ENCODE measurements at regions of chr1 and their contacts with region 1.

Region 1: DNA sequence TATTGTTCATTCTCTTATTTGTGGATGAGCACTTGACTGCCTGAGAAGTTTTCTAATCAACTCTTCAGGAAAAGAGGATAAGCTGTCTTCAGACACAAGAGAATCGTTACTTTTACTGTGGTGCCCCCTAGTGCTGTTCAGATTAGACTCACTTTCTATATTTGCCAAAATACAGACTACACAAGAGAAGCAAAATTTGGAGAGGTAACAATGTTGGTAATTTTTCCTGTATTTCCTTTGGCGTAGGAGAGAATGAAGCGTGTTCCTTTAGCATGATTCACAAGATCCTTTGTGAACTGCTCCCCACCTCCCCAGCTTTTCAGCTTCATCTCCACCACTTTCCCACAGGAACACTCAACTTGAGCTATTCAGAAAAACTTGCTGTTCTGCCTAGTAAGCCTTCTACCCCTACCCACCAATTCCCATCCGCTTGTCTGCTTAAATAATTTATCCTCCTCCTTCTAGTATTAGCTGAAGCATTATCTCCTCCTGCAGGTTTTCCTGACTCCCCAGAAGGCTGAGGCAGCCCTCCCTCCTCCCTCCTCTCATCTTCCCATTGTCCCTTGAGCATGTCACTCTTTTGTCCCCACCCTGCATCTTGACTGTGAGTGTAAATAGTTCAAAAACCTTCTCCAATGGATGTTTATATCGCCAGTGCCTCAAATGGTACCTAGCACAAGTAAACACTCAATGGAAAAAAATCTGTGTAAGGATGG is 4.5 kb downstream of the TNFSF4 start:
- DNase-seq: peak; percentile 39
- H3K4me3 Mint-ChIP-seq: no peak overlapping the region
- H3K27ac Mint-ChIP-seq: no peak overlapping the region
- H3K4me1 Mint-ChIP-seq: peaks cover 37% of the 10 kb centered on the region
- H3K27me3 Mint-ChIP-seq: peaks cover 4% of the 10 kb centered on the region

Region 2: GRCh38 chr1:172357753-172358385 is 844.7 kb before region 1 on chr1:
- CTCF ChIA-PET with region 1: no interaction called
- intact Hi-C with region 1: loop called (anchors 2 kb)
- DNase-seq: no peak
- H3K4me3 Mint-ChIP-seq: no peak overlapping the region
- H3K27ac Mint-ChIP-seq: peak overlapping the region; percentile 55
- H3K4me1 Mint-ChIP-seq: peaks cover 64% of the 10 kb centered on the region
- H3K27me3 Mint-ChIP-seq: no peaks in the 10 kb centered on the region

Region 3: GRCh38 chr1:172638885-172639831 is 563.4 kb before region 1 on chr1:
- CTCF ChIA-PET with region 1: no interaction called
- intact Hi-C with region 1: loop called (anchors 5 kb)
- DNase-seq: peak; percentile 90
- H3K4me3 Mint-ChIP-seq: peak overlapping the region; percentile 42
- H3K27ac Mint-ChIP-seq: peak overlapping the region; percentile 93
- H3K4me1 Mint-ChIP-seq: peaks cover 73% of the 10 kb centered on the region
- H3K27me3 Mint-ChIP-seq: peaks cover 9% of the 10 kb centered on the region

Region 4: GRCh38 chr1:172826096-172826743 is 376.4 kb before region 1 on chr1:
- CTCF ChIA-PET with region 1: interaction called, 42 read pairs
- intact Hi-C with region 1: loop called (anchors 1 kb)
- DNase-seq: no peak
- H3K4me3 Mint-ChIP-seq: no peak overlapping the region
- H3K27ac Mint-ChIP-seq: no peak overlapping the region
- H3K4me1 Mint-ChIP-seq: no peaks in the 10 kb centered on the region
- H3K27me3 Mint-ChIP-seq: peaks cover 6% of the 10 kb centered on the region

Region 5: DNA sequence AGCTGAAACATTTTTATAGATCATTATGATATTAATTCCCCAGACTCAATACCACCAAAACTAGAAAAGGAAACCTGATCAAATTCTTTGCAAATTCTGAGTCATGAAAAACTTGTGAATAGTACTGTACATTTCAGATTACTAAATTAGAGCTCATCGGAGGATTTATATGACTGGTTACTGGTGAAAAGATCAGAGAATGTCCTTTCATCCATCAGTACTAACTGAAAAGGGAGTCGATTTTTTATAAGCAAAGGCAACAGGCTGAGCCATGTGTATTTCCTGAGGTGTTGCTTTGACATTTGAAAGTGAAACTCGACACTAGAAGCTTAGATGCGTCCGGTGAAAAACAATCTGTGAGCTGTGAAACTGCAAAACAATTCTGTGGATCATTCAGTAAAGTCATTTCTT is 307.5 kb before region 1 on chr1:
- CTCF ChIA-PET with region 1: interaction called, 4 read pairs
- intact Hi-C with region 1: loop called (anchors 1 kb)
- DNase-seq: peak; percentile 40
- H3K4me3 Mint-ChIP-seq: no peak overlapping the region
- H3K27ac Mint-ChIP-seq: peak overlapping the region; percentile 9
- H3K4me1 Mint-ChIP-seq: peaks cover 42% of the 10 kb centered on the region
- H3K27me3 Mint-ChIP-seq: peaks cover 4% of the 10 kb centered on the region

Region 6: GRCh38 chr1:173190101-173190906 is 12.3 kb before region 1 on chr1:
- CTCF ChIA-PET with region 1: interaction called, 11 read pairs
- intact Hi-C with region 1: no loop called
- DNase-seq: peak; percentile 11
- H3K4me3 Mint-ChIP-seq: no peak overlapping the region
- H3K27ac Mint-ChIP-seq: no peak overlapping the region
- H3K4me1 Mint-ChIP-seq: peaks cover 6% of the 10 kb centered on the region
- H3K27me3 Mint-ChIP-seq: no peaks in the 10 kb centered on the region

Region 7: DNA sequence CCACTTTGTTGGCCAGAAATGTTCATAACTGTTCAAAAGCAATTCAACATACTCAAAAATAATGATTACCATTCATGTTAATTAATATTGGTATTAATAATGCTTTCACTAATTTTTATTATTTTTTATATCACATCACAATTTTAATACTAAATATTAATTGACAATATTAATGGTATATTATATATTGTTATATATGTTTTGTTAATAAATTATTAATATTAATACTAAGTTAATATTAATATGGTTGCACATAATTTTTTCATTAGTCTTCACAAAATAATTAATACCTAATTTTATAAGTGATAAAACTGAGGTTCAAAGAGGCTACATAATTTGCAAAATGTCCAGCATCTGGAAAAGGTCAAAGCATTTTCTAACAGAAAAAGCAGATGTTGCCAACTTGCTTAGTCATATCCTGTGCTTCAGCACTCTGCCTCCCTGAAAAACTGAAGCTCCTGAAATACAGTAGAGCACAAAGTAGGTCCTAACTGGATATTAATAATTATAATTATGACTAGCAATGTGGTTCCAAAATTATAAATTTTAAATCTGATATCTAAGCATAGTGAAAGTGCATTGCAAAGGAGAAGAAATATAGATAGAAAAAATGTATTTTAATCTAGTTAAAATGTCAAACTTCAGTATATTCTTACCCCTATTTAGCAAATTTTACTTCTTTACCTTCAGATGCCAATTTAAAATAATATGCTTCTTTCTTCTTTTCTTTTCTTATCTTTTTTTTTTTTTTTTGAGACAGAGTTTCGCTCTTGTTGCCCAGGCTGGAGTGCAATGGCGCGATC is 127.8 kb after region 1 on chr1:
- CTCF ChIA-PET with region 1: no interaction called
- intact Hi-C with region 1: loop called (anchors 1 kb)
- DNase-seq: no peak
- H3K4me3 Mint-ChIP-seq: no peak overlapping the region
- H3K27ac Mint-ChIP-seq: no peak overlapping the region
- H3K4me1 Mint-ChIP-seq: peaks cover 25% of the 10 kb centered on the region
- H3K27me3 Mint-ChIP-seq: no peaks in the 10 kb centered on the region

Measured in activated naive CD4-positive, alpha-beta T cell treated with anti-CD3 and anti-CD28 coated beads for 36 hours (primary cell).